Activated naive CD4-positive, alpha-beta T cell treated with anti-CD3 and anti-CD28 coated beads for 36 hours (primary cell): ENCODE measurements at regions of chr2 and their contacts with region 1.

Region 1: DNA sequence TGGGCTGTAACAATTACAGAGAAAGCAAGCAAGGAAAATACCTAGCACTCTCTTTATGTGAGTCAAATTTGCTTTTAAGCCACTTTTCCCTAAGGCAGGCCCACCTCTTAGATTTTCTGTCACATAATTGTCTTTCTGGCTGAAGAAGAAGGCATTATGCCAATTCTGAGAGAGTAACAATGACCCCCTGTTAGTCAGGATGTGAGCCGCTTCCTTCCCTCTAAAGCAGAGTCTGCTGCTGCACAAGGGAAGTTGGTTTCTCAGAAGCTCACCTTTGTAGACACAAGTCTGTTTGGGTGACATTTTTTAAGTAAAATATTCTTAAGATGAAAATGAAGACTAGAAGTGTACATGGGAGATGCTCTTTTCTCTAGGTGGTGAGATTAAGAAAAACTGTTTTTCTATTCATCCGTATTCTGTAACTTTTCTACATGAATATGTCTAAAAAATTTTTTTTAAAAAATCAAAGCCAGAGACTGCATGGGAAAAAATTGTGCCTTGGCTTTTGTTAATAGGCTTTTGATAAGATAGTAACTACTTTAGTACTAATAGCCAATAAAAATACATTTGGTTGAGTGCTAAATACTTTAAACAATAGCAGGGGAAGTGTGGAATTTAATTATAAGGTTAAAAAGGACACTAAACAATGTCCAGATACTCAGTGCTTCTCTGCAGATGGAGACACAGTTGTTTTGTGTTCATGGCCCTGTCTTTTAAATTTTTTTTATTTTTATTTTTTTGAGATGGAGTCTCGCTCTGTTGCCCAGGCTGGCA is 33.4 kb upstream of the VPS54 start:
- DNase-seq: peak; percentile 38
- H3K4me3 Mint-ChIP-seq: no peak overlapping the region
- H3K27ac Mint-ChIP-seq: peak overlapping the region; percentile 8
- H3K4me1 Mint-ChIP-seq: peaks cover 39% of the 10 kb centered on the region
- H3K27me3 Mint-ChIP-seq: no peaks in the 10 kb centered on the region

Region 2: GRCh38 chr2:63698825-63699548 is 353.7 kb before region 1 on chr2:
- CTCF ChIA-PET with region 1: no interaction called
- intact Hi-C with region 1: loop called (anchors 2 kb)
- DNase-seq: peak; percentile 22
- H3K4me3 Mint-ChIP-seq: no peak overlapping the region
- H3K27ac Mint-ChIP-seq: no peak overlapping the region
- H3K4me1 Mint-ChIP-seq: no peaks in the 10 kb centered on the region
- H3K27me3 Mint-ChIP-seq: no peaks in the 10 kb centered on the region

Region 3: DNA sequence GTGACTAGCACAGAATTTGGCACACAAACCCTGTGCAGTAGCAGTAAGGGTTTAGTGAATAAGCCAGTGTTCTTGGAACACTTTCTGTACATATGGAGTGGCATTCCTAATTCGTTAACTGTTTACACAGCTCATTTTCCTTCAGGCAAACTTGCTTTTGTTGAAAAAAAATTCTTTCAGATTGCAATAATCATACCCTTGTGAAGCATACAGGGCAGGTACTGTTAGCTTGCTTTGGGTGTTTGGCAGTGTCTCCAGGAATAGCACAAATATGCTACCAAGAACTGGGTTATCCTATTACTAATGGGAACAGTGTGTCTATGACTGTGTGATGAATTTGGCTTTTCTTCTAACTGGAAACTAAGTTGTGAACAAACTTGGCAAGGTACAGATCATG is 177.5 kb before region 1 on chr2:
- CTCF ChIA-PET with region 1: no interaction called
- intact Hi-C with region 1: no loop called
- DNase-seq: no peak
- H3K4me3 Mint-ChIP-seq: no peak overlapping the region
- H3K27ac Mint-ChIP-seq: no peak overlapping the region
- H3K4me1 Mint-ChIP-seq: peaks cover 24% of the 10 kb centered on the region
- H3K27me3 Mint-ChIP-seq: no peaks in the 10 kb centered on the region

Region 4: DNA sequence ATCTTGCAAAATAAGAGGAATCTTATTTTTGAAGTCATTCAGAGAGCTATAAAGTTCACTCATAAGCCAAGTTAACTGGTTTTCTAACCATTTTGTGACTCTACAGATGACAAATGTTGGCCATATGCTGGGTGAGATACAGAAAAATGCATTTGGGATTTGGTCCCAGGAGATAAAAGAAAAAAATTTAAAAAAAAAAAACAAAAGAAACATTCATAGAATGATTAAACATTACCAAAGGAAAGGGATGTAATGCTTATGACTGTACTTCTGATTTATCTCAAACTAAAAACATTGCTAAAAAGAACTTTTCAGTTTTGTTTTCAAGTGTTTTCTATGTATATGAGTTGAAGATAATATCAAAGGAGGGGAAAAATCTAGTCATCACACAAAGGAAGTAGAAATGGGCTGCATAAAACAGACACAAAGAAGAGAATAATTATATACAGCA is 48.5 kb after region 1 on chr2:
- CTCF ChIA-PET with region 1: interaction called, 4 read pairs
- intact Hi-C with region 1: loop called (anchors 1 kb)
- DNase-seq: no peak
- H3K4me3 Mint-ChIP-seq: no peak overlapping the region
- H3K27ac Mint-ChIP-seq: peak overlapping the region; percentile 76
- H3K4me1 Mint-ChIP-seq: peaks cover 51% of the 10 kb centered on the region
- H3K27me3 Mint-ChIP-seq: no peaks in the 10 kb centered on the region

Region 5: GRCh38 chr2:64453770-64454385 is 401.2 kb after region 1 on chr2 and contains the start of gene LGALSL:
- CTCF ChIA-PET with region 1: no interaction called
- intact Hi-C with region 1: loop called (anchors 1 kb)
- DNase-seq: peak; percentile 14
- H3K4me3 Mint-ChIP-seq: peak within 1 kb of the TSS; percentile 84
- H3K27ac Mint-ChIP-seq: no peak within 1 kb of the TSS
- H3K4me1 Mint-ChIP-seq: peaks cover 6% of the 10 kb centered on the region
- H3K27me3 Mint-ChIP-seq: peaks cover 5% of the 10 kb centered on the region
- total RNA-seq, gene LGALSL: 1.0 to 1.5 TPM